ENCODE measurements at regions of chr19 and their contacts with region 1.

Region 1: DNA sequence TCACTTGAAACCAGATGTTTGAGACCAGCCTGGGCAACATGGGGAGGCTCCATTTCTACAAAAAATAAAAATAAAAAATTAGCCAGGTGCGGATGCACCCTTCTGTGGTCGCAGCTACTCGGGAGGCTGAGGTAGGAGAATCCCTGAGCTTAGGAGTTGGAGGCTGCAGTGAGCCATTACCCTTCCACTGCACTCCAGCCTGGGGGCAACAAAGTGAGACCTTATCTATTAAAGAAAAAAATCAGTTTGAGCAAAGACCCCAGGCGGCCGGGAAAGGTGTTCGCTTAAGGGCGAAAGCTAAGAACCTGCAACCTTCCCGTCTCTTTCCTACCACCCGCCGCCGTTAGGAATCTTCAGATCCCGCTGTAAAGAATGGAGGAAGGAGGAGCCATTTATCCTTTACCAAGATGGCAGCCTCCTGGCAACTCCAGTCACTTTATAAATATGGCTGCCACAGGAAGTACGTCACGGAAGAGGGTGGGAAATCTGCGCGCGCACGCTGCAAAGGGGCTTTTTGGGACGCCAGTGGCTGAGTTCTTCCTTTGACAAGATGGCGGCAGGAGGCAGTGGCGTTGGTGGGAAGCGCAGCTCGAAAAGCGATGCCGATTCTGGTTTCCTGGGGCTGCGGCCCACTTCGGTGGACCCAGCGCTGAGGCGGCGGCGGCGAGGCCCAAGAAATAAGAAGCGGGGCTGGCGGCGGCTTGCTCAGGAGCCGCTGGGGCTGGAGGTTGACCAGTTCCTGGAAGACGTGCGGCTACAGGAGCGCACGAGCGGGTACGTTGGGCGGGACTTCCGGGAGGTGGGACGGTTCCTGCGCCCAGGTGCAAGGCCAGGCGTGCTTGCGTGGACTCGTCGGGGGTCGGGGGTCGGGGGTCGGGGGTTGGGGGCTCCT is at the start of gene NOP53:
- DNase-seq: peak; percentile 96
- ATAC-seq: peak; percentile 78
- H3K4me3 Mint-ChIP-seq: peak within 1 kb of the TSS; percentile 99
- H3K27ac Mint-ChIP-seq: peak within 1 kb of the TSS; percentile 100
- H3K4me1 Mint-ChIP-seq: peaks cover 51% of the 10 kb centered on the region
- H3K27me3 Mint-ChIP-seq: no peaks in the 10 kb centered on the region
- CTCF ChIP-seq: no peak
- total RNA-seq, gene NOP53: 695 and 783 TPM in 2 replicates

Region 2: DNA sequence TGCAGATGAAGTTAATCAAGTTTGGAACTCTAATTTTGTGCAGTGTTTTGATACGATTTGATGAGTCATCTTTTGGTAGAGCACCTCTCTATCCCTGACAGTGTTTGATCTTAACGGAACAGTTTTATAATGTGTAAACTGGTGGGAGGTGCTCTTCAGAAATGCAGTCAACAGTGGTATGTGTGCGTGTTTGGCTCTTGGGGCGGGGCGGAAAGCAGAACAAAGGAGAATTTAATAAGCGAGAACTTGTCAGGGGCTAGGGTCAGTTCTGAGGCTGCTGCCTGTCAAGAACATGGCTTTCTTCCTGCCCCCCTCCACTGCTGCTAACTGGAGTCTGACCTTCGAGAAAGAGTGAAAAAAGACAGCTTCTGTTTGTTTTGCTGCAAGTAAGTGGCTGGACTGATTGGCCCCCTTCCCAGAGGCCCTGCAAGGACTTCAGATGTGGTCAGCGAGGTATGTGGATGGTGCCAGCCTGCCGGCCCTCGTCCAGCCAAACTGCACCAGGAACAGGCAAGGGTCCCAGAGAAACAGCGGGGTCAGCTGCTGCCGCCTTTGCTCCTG is 555.0 kb before region 1 on chr19:
- CTCF ChIA-PET with region 1: no interaction called
- POLR2A ChIA-PET with region 1: interaction called, 11 read pairs
- intact Hi-C with region 1: no loop called
- DNase-seq: no peak
- ATAC-seq: no peak
- H3K4me3 Mint-ChIP-seq: no peak overlapping the region
- H3K27ac Mint-ChIP-seq: no peak overlapping the region
- H3K4me1 Mint-ChIP-seq: peaks cover 20% of the 10 kb centered on the region
- H3K27me3 Mint-ChIP-seq: no peaks in the 10 kb centered on the region
- CTCF ChIP-seq: no peak

Region 3: GRCh38 chr19:47436712-47437401 is 308.4 kb before region 1 on chr19:
- CTCF ChIA-PET with region 1: interaction called, 9 read pairs
- POLR2A ChIA-PET with region 1: interaction called, 4 read pairs
- intact Hi-C with region 1: loop called (anchors 1 kb)
- DNase-seq: peak; percentile 71
- ATAC-seq: peak; percentile 93
- H3K4me3 Mint-ChIP-seq: no peak overlapping the region
- H3K27ac Mint-ChIP-seq: no peak overlapping the region
- H3K4me1 Mint-ChIP-seq: peaks cover 7% of the 10 kb centered on the region
- H3K27me3 Mint-ChIP-seq: peaks cover 68% of the 10 kb centered on the region
- CTCF ChIP-seq: no peak

Region 4: DNA sequence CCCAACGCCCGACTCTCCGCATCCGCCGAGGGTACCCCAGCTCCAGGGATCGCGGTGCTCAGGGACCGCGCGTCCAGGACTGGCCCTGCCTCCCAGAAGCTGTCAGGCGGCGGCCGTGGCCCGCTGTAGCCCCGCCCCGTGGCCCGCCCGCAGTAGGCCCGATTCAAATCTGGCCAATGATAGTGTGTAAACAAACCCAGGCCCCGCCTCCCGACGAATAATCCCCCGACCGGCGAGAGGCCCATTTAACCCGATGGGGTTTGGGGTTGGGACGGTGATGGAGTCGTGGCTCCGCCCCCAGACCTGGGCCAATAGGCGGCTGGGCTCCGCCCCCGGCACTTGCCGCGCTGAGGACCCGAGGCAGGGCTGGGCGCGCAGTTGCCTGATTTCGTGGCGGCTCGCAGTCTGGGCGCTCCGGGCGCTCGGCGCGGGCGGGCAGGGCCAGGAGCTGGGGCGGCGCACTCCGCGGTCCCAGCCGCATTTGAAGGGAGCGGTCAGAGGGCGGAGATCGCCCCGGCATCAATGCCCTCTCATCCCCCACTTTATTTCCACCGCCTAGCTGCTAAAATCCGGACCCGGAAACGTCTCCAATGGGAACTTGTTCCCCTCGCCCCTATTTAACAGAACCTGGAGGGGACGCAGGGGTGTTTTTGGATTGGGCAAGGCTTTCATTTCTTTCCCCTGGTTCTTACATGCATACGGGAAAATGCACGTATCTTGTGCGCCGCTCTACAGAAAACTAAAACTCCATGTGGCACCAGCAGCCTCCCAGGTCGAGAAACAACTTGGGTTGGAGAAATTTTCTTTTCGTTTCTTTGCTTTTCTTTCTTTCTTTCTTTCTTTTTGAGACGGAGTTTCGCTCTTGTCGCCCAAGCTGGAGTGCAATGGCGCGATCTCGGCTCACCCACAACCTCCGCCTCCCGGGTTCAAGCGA is 144.7 kb before region 1 on chr19:
- CTCF ChIA-PET with region 1: no interaction called
- POLR2A ChIA-PET with region 1: no interaction called
- intact Hi-C with region 1: loop called (anchors 2 kb)
- DNase-seq: peak; percentile 92
- ATAC-seq: peak; percentile 97
- H3K4me3 Mint-ChIP-seq: peak overlapping the region; percentile 84
- H3K27ac Mint-ChIP-seq: peak overlapping the region; percentile 76
- H3K4me1 Mint-ChIP-seq: peaks cover 10% of the 10 kb centered on the region
- H3K27me3 Mint-ChIP-seq: peaks cover 9% of the 10 kb centered on the region
- CTCF ChIP-seq: no peak

Region 5: GRCh38 chr19:47697863-47698609 is 47.2 kb before region 1 on chr19:
- CTCF ChIA-PET with region 1: no interaction called
- POLR2A ChIA-PET with region 1: interaction called, 5 read pairs
- intact Hi-C with region 1: loop called (anchors 2 kb)
- DNase-seq: peak; percentile 37
- ATAC-seq: peak; percentile 71
- H3K4me3 Mint-ChIP-seq: no peak overlapping the region
- H3K27ac Mint-ChIP-seq: no peak overlapping the region
- H3K4me1 Mint-ChIP-seq: no peaks in the 10 kb centered on the region
- H3K27me3 Mint-ChIP-seq: no peaks in the 10 kb centered on the region
- CTCF ChIP-seq: no peak

Region 6: GRCh38 chr19:47756953-47757608 is 11.8 kb after region 1 on chr19:
- CTCF ChIA-PET with region 1: no interaction called
- POLR2A ChIA-PET with region 1: interaction called, 12 read pairs
- intact Hi-C with region 1: no loop called
- DNase-seq: no peak
- ATAC-seq: no peak
- H3K4me3 Mint-ChIP-seq: no peak overlapping the region
- H3K27ac Mint-ChIP-seq: no peak overlapping the region
- H3K4me1 Mint-ChIP-seq: no peaks in the 10 kb centered on the region
- H3K27me3 Mint-ChIP-seq: no peaks in the 10 kb centered on the region
- CTCF ChIP-seq: no peak